ENCODE measurements at regions of chr4 and their contacts with region 1.

Region 1: GRCh38 chr4:123649645-123650391 is 253.2 kb downstream of the SPRY1 start:
- DNase-seq: peak; percentile 13
- H3K4me3 ChIP-seq: no peak overlapping the region
- H3K27ac ChIP-seq: no peak overlapping the region
- H3K4me1 ChIP-seq: no peaks in the 10 kb centered on the region
- H3K27me3 ChIP-seq: no peaks in the 10 kb centered on the region
- CTCF ChIP-seq: no peak

Region 2: GRCh38 chr4:123564758-123565346 is 85.0 kb before region 1 on chr4:
- CTCF ChIA-PET with region 1: no interaction called
- POLR2A ChIA-PET with region 1: no interaction called
- intact Hi-C with region 1: loop called (anchors 10 kb)
- DNase-seq: peak; percentile 85
- H3K4me3 ChIP-seq: no peak overlapping the region
- H3K27ac ChIP-seq: no peak overlapping the region
- H3K4me1 ChIP-seq: no peaks in the 10 kb centered on the region
- H3K27me3 ChIP-seq: no peaks in the 10 kb centered on the region
- CTCF ChIP-seq: peak; percentile 97